Kidney (tissue), 22 donors: ENCODE measurements at regions of chr14 and their contacts with region 1.

Region 1: GRCh38 chr14:104820669-104821228 is 19.8 kb downstream of the ZBTB42 start:
- DNase-seq: peak; percentile 80 to 86 (median 85)
- H3K4me3 ChIP-seq: no peak overlapping the region
- H3K27ac ChIP-seq: no peak overlapping the region
- H3K4me1 ChIP-seq: peaks cover 0 to 9% (median 0%) of the 10 kb centered on the region in 3 donors
- H3K27me3 ChIP-seq: no peaks in the 10 kb centered on the region
- CTCF ChIP-seq: peak; percentile 43

Region 2: GRCh38 chr14:104770851-104771272 is 49.9 kb before region 1 on chr14:
- intact Hi-C with region 1: loop called (anchors 5 kb)
- DNase-seq: no peak
- H3K4me3 ChIP-seq: no peak overlapping the region
- H3K27ac ChIP-seq: no peak overlapping the region
- H3K4me1 ChIP-seq: peaks cover 0 to 7% (median 0%) of the 10 kb centered on the region in 3 donors
- H3K27me3 ChIP-seq: no peaks in the 10 kb centered on the region
- CTCF ChIP-seq: peak; percentile 24

Region 3: GRCh38 chr14:105005929-105006830 is 185.4 kb after region 1 on chr14:
- intact Hi-C with region 1: no loop called
- DNase-seq: no peak
- H3K4me3 ChIP-seq: no peak overlapping the region
- H3K27ac ChIP-seq: no peak overlapping the region
- H3K4me1 ChIP-seq: no peaks in the 10 kb centered on the region
- H3K27me3 ChIP-seq: no peaks in the 10 kb centered on the region
- CTCF ChIP-seq: no peak